ENCODE measurements at regions of chr3 and their contacts with region 1.

Region 1: GRCh38 chr3:111998636-111999483 is at the start of gene TAGLN3:
- DNase-seq: no peak
- H3K4me3 Mint-ChIP-seq: peak within 1 kb of the TSS; percentile 34
- H3K27ac Mint-ChIP-seq: no peak within 1 kb of the TSS
- H3K4me1 Mint-ChIP-seq: peaks cover 39% of the 10 kb centered on the region
- H3K27me3 Mint-ChIP-seq: no peaks in the 10 kb centered on the region
- total RNA-seq, gene TAGLN3: 0.78 to 0.85 TPM

Region 2: DNA sequence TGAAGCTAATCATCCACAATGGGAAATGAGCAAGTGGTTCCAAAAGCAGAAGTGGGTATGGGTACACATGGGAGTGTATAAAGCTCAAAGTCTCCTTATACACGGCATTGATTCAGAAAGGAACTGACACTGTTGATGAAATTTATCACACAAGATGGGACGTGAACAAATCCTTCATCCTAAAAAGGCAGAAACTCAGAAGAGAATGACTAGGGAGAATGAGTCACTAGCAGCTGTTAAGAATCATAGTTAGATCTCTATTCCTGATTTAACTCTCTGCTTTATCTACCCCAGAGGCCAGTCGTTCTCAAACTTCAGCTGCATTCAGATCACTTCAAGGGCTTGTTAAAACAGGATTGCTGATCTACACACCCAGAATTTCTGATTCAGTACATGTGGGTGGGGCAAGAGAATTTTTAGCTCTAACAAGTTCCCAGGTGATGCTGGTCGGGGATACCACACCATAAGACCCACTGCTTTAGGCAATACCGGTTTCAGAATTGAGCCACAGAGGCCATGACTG is 237.5 kb before region 1 on chr3:
- CTCF ChIA-PET with region 1: no interaction called
- POLR2A ChIA-PET with region 1: no interaction called
- intact Hi-C with region 1: loop called (anchors 5 kb)
- DNase-seq: peak; percentile 29
- H3K4me3 Mint-ChIP-seq: no peak overlapping the region
- H3K27ac Mint-ChIP-seq: peak overlapping the region; percentile 51
- H3K4me1 Mint-ChIP-seq: peaks cover 15% of the 10 kb centered on the region
- H3K27me3 Mint-ChIP-seq: no peaks in the 10 kb centered on the region

Region 3: DNA sequence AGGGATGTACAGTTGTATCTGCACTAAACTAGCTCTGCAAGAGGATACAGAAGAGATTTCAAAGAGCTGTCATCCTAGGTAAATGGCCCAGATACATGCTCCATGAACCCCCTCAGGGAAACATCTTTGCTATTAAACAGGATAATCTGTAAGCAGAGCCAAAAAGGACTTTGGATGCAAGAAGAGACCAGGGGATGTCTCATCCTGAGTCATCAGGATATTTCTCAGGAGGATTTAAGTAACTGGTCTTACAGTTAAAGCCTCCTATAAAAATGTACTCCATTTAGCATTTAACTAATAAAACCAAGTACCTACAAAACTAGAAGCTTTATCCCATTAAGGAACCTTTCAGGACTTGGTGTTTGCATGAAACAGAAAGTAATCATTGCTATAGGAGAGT is 188.0 kb before region 1 on chr3:
- CTCF ChIA-PET with region 1: no interaction called
- POLR2A ChIA-PET with region 1: no interaction called
- intact Hi-C with region 1: no loop called
- DNase-seq: no peak
- H3K4me3 Mint-ChIP-seq: no peak overlapping the region
- H3K27ac Mint-ChIP-seq: no peak overlapping the region
- H3K4me1 Mint-ChIP-seq: no peaks in the 10 kb centered on the region
- H3K27me3 Mint-ChIP-seq: no peaks in the 10 kb centered on the region

Region 4: DNA sequence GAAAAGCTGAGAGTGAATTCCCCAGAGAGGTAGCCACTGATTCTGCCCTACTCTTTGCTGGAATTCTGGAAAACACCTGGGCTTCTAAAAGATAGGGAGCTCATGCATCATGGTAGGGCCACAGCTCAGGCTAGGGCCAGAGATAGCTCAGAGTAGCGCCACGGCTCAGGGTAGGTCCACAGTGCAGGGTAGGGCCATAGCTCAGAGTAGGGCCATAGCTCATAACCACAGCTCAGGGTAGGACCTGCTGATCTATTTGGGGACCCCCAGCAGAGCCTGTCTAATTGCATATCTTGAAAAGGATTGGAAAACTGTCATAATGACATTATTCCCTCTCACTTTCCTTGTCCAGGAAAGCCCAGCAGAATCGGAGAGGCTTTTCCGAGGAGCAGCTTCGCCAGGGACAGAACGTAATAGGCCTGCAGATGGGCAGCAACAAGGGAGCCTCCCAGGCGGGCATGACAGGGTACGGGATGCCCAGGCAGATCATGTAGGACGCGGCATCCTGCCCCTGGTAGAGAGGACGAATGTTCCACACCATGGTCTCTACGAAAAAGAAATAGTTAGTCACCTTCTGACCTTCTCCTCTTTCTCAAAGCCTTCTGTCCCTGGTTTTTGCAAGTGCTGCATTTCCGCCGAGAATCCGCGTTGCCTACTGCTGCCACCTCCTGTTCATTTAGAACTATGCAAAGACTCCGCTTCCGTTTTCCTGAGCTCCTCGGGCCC is 14.4 kb after region 1 on chr3:
- CTCF ChIA-PET with region 1: interaction called, 395 read pairs
- POLR2A ChIA-PET with region 1: interaction called, 3 read pairs
- intact Hi-C with region 1: loop called (anchors 1 kb)
- DNase-seq: peak; percentile 82
- H3K4me3 Mint-ChIP-seq: no peak overlapping the region
- H3K27ac Mint-ChIP-seq: peak overlapping the region; percentile 40
- H3K4me1 Mint-ChIP-seq: peaks cover 19% of the 10 kb centered on the region
- H3K27me3 Mint-ChIP-seq: no peaks in the 10 kb centered on the region

Region 5: DNA sequence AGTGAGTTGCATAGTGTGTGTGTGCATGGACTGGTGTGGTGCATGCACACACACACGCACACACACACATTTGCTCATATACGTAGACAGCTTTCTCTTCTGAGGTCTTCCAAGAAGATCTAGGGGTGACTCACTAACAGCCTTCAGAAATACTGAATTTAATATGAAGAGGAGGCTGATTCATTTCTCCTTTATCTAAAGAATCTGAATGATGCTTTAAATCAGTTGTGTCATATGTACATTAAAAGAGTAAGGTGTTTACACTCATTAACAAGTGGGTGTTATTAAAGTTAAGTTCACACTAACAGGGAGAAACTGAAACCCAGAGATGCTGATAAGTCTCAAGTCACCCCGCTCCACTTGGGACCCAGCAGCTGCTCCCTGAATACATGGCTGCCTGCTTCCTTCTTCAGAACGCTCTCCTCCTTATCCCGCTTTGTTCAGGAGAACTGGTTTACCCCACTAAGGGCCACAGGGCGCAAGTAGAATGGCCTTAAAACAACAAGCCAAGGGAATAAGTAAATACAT is 57.7 kb after region 1 on chr3:
- CTCF ChIA-PET with region 1: no interaction called
- POLR2A ChIA-PET with region 1: no interaction called
- intact Hi-C with region 1: loop called (anchors 1 kb)
- DNase-seq: peak; percentile 53
- H3K4me3 Mint-ChIP-seq: peak overlapping the region; percentile 1
- H3K27ac Mint-ChIP-seq: peak overlapping the region; percentile 25
- H3K4me1 Mint-ChIP-seq: peaks cover 25% of the 10 kb centered on the region
- H3K27me3 Mint-ChIP-seq: peaks cover 11% of the 10 kb centered on the region

Region 6: GRCh38 chr3:112357930-112358780 is 359.3 kb after region 1 on chr3:
- CTCF ChIA-PET with region 1: no interaction called
- POLR2A ChIA-PET with region 1: no interaction called
- intact Hi-C with region 1: no loop called
- DNase-seq: peak; percentile 62
- H3K4me3 Mint-ChIP-seq: peak overlapping the region; percentile 38
- H3K27ac Mint-ChIP-seq: peak overlapping the region; percentile 70
- H3K4me1 Mint-ChIP-seq: peaks cover 23% of the 10 kb centered on the region
- H3K27me3 Mint-ChIP-seq: no peaks in the 10 kb centered on the region

Measured in activated CD4-positive, alpha-beta memory T cell treated with anti-CD3 and anti-CD28 coated beads for 36 hours (primary cell).